Posterior vena cava (tissue), 2 donors: ENCODE measurements at regions of chr5 and their contacts with region 1.

Region 1: DNA sequence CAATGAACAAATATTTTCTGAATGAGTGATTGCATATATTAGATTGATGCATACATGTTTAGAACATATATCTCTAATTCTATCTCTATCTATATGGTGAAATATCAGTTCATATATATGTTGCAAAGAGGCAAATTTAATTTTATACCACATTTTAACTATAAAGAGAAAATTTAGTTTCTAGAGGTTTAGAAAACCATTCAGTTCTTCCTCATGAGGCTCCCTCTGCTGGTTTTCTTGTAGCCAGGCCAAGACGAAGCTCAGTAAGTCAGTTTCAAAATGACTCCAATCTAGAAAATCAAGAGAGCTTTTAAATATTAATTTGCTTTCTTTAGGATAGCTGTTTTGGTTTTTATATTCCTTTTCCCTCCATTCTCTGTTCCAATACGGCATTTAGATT is 312.1 kb downstream of the TMEM232 start:
- DNase-seq: no peak

Region 2: DNA sequence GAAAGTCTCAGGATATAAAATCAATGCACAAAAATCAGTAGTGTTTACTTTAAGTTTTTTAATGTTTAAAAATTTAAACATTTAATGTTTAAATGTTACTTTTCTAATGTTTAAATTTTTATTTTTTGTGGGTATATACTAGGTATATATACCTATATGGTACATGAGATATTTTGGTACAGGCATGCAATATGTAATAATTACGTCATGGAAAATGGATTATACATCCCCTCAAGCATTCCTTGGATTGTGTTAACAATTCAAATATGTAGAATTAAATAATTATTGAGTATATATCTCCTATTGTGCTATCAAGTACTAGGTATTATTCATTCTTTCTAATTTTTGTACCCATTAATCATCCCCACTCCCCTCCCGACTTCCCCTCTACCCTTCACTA is 20.9 kb after region 1 on chr5:
- intact Hi-C with region 1: no loop called
- DNase-seq: no peak

Region 3: GRCh38 chr5:110463106-110463505 is 48.7 kb after region 1 on chr5:
- intact Hi-C with region 1: no loop called
- DNase-seq: no peak

Region 4: GRCh38 chr5:111215971-111216370 is 801.6 kb after region 1 on chr5:
- intact Hi-C with region 1: loop called in 1 of 2 experiments (anchors 5 kb)
- DNase-seq: no peak